Activated CD4-positive, alpha-beta memory T cell treated with anti-CD3 and anti-CD28 coated beads for 36 hours (primary cell): ENCODE measurements at regions of chr15 and their contacts with region 1.

Region 1: DNA sequence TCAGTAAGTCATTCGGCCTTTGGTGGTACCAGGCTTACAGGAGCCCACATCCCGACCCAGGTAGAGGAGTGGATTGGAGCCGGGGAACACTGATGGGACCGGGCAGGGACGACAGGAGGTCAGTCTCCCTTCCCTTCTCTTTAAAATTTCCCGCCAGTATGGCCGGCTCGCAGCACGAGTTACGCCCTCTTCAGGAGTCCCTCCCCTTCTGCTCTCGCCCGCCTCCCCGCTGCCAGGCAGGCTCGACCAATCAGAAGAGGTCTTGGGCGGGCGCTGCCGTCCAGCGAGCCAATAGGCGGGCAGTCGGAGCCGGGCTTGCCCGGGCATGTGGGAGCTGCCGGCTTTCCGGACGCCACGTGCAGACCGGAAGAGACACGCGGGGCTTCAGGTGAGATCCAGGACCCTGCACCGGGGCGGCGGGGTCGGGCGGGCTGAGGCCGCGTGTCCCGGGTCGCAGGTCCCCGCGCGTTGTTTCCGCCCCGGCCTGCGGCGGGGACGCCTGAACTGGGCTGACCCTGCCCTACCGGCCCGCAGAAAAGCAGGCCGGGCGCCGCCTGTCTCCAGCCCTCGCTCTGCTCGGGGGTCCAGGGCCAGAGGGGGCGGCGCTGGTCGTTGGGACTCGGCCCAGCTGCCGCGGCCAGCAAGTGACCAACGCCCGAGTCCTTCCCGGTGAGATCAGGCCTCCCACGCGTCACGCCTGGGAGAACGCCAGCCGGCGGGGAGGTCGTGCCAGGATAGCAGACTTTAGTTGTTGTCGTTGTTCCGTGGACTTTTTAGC is at the start of gene AEN:
- DNase-seq: peak; percentile 97
- H3K4me3 Mint-ChIP-seq: peak within 1 kb of the TSS; percentile 94
- H3K27ac Mint-ChIP-seq: peak within 1 kb of the TSS; percentile 97
- H3K4me1 Mint-ChIP-seq: peaks cover 39% of the 10 kb centered on the region
- H3K27me3 Mint-ChIP-seq: no peaks in the 10 kb centered on the region
- total RNA-seq, gene AEN: 55.5 to 55.7 TPM

Region 2: GRCh38 chr15:88631464-88632028 is 10.4 kb after region 1 on chr15:
- CTCF ChIA-PET with region 1: interaction called, 30 read pairs
- POLR2A ChIA-PET with region 1: interaction called, 22 read pairs
- intact Hi-C with region 1: no loop called
- DNase-seq: no peak
- H3K4me3 Mint-ChIP-seq: no peak overlapping the region
- H3K27ac Mint-ChIP-seq: peak overlapping the region; percentile 61
- H3K4me1 Mint-ChIP-seq: peaks cover 92% of the 10 kb centered on the region
- H3K27me3 Mint-ChIP-seq: no peaks in the 10 kb centered on the region

Region 3: GRCh38 chr15:88664151-88664778 is 43.1 kb after region 1 on chr15:
- CTCF ChIA-PET with region 1: interaction called, 25 read pairs
- POLR2A ChIA-PET with region 1: interaction called, 3 read pairs
- intact Hi-C with region 1: loop called (anchors 1 kb)
- DNase-seq: peak; percentile 67
- H3K4me3 Mint-ChIP-seq: no peak overlapping the region
- H3K27ac Mint-ChIP-seq: no peak overlapping the region
- H3K4me1 Mint-ChIP-seq: peaks cover 19% of the 10 kb centered on the region
- H3K27me3 Mint-ChIP-seq: peaks cover 4% of the 10 kb centered on the region

Region 4: GRCh38 chr15:88686166-88686565 is 65.0 kb after region 1 on chr15:
- CTCF ChIA-PET with region 1: no interaction called
- POLR2A ChIA-PET with region 1: no interaction called
- intact Hi-C with region 1: no loop called
- DNase-seq: no peak
- H3K4me3 Mint-ChIP-seq: no peak overlapping the region
- H3K27ac Mint-ChIP-seq: no peak overlapping the region
- H3K4me1 Mint-ChIP-seq: no peaks in the 10 kb centered on the region
- H3K27me3 Mint-ChIP-seq: peaks cover 11% of the 10 kb centered on the region

Region 5: DNA sequence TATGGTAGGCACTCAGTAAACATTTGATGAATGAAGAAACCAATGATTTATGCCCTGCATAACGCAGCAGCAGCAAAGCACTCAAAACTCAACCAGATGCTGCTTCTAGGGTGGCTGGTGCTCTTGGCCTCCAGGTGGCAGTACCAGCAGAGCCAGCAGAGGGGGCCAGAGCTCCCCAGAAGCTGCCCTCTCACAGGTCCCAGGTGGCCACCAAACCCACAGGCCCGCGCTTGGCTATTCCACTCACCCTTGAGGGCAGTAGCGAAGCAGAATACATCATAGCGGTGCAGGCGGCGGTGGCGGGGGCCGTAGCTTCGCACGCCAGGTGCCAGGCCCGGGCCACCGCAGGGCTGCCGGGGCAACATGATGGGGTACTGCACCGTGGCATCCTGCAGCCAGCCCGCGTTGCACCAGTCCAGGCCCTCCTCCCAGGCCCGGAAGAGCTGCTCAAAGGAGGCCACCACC is 257.6 kb after region 1 on chr15:
- CTCF ChIA-PET with region 1: interaction called, 11 read pairs
- POLR2A ChIA-PET with region 1: no interaction called
- intact Hi-C with region 1: no loop called
- DNase-seq: peak; percentile 58
- H3K4me3 Mint-ChIP-seq: no peak overlapping the region
- H3K27ac Mint-ChIP-seq: no peak overlapping the region
- H3K4me1 Mint-ChIP-seq: no peaks in the 10 kb centered on the region
- H3K27me3 Mint-ChIP-seq: no peaks in the 10 kb centered on the region

Region 6: DNA sequence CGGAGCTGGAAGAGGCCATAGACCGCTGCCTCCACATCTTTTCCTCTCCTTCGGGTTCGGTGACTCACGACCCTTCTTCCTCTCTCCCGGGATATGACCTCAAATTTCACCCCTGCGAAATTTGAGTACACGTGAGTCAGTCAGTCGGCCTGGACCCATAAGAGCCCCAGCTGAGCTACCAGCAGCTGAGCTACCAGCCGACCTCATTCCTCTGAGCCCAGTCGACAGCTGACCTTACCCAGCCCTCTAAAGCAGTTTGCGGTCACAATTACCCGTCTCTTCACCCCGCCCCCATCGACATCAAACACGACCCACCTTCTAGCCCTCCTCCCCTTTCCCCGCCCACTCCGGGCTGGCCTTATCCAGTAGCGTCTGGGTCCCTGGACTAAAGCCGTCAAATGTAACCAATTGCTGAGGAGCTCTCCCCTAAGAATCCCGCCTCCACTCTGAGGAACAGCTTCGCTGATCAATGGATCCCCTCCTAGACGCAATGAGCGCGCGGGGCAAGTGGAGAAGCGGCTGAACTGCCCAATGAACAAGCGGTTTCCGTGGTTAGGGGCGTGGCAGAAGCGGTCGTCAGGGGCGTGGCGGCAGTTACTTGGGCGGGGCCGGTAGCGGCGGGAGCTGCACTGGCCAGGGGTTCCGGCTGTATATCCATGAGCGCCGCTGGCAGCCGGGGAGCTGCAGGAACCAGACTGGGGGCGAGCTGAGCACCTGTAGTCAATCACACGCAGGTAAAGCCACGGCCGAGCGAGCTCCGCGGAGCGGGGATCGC is 466.8 kb after region 1 on chr15 and contains the start of gene ABHD2:
- CTCF ChIA-PET with region 1: no interaction called
- POLR2A ChIA-PET with region 1: no interaction called
- intact Hi-C with region 1: loop called (anchors 5 kb)
- DNase-seq: peak; percentile 99
- H3K4me3 Mint-ChIP-seq: no peak within 1 kb of the TSS
- H3K27ac Mint-ChIP-seq: no peak within 1 kb of the TSS
- H3K4me1 Mint-ChIP-seq: peaks cover 36% of the 10 kb centered on the region
- H3K27me3 Mint-ChIP-seq: no peaks in the 10 kb centered on the region
- total RNA-seq, gene ABHD2: 36.0 to 38.5 TPM

Region 7: GRCh38 chr15:89317186-89317720 is 696.1 kb after region 1 on chr15:
- CTCF ChIA-PET with region 1: no interaction called
- POLR2A ChIA-PET with region 1: no interaction called
- intact Hi-C with region 1: no loop called
- DNase-seq: peak; percentile 20
- H3K4me3 Mint-ChIP-seq: no peak overlapping the region
- H3K27ac Mint-ChIP-seq: peak overlapping the region; percentile 78
- H3K4me1 Mint-ChIP-seq: peaks cover 24% of the 10 kb centered on the region
- H3K27me3 Mint-ChIP-seq: no peaks in the 10 kb centered on the region